ENCODE measurements at regions of chr10 and their contacts with region 1.

Region 1: GRCh38 chr10:113058523-113058961 is 108.5 kb downstream of the TCF7L2 start:
- DNase-seq: no peak
- ATAC-seq: peak; percentile 73
- H3K4me3 ChIP-seq: peak overlapping the region; percentile 10 to 34; a peak in 3 of 4 replicates
- H3K27ac ChIP-seq: peak overlapping the region; percentile 97
- H3K4me1 ChIP-seq: peaks cover 90% of the 10 kb centered on the region
- H3K27me3 ChIP-seq: no peaks in the 10 kb centered on the region
- CTCF ChIP-seq: no peak

Region 2: DNA sequence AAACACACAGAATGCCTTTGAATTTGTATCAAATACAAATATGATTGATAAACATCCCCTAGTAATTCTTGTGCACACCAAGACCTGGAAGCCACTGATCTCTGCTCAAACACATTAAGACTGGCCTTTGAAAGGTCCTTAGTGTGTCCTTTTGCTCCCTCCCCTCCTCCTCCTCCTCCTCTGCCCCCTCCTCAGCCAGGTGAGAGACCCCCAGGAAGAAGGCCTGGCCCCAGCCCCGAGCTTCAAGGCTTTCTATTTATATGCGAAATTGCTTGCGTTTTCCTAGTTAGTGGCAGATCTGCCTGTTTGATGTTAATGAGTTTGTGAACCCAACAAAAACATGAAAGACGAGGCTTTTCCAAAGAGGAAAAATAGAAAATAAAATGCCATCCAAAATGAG is 172.1 kb before region 1 on chr10:
- CTCF ChIA-PET with region 1: no interaction called
- POLR2A ChIA-PET with region 1: no interaction called
- in situ Hi-C with region 1: no loop called
- intact Hi-C with region 1: no loop called
- DNase-seq: no peak
- ATAC-seq: no peak
- H3K4me3 ChIP-seq: no peak overlapping the region
- H3K27ac ChIP-seq: no peak overlapping the region
- H3K4me1 ChIP-seq: no peaks in the 10 kb centered on the region
- H3K27me3 ChIP-seq: no peaks in the 10 kb centered on the region
- CTCF ChIP-seq: no peak

Region 3: GRCh38 chr10:113126229-113127201 is 68.0 kb after region 1 on chr10:
- CTCF ChIA-PET with region 1: interaction called, 12 read pairs
- POLR2A ChIA-PET with region 1: no interaction called
- in situ Hi-C with region 1: no loop called
- intact Hi-C with region 1: no loop called
- DNase-seq: peak; percentile 25
- ATAC-seq: peak; percentile 100
- H3K4me3 ChIP-seq: peak overlapping the region; percentile 23 to 51
- H3K27ac ChIP-seq: peak overlapping the region; percentile 83
- H3K4me1 ChIP-seq: peaks cover 48% of the 10 kb centered on the region
- H3K27me3 ChIP-seq: no peaks in the 10 kb centered on the region
- CTCF ChIP-seq: peak; percentile 99

Measured in Panc1 (cell line).